ENCODE measurements at regions of chr2 and their contacts with region 1.

Region 1: DNA sequence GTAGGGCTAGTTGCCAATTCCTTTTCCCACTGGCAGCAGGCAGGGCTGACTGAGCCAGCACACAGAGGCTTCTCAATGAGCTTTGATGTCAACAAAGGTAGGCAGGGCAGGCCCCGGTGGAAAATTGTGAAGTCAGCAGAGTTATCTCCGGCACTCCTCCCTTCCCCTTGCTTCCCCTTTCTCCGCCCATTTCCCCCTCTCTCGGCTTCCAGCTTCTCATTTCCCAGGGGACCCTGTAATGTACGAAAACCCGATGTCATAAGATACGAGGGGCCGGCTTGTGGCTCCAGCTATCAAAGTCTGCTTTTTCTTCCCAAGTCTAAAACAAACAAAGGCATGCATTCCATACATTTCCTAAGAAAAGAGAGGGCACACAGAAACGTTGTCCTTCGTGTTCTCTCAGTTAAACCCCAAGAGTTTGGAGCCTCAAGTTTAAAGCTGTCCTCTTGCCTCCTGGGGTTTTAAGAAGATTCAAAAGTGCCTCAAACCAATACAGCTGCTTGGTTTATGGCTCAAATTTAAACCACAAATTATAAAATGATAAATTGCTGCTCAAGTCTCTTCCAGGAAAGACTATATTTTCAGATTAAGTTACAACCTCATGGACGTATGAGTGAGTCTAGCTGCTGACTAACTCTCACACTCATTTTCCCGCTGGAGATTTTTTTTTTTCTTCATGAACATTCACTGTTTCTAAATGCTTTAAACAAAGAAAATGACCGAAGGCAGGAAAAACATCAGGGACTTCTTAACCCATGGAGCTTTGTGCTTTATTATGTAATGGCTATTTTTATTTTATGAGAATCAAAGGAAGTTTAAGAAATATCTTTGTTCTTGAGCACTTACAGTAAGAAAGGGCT is 27.2 kb upstream of the EML4 start:
- DNase-seq: peak; percentile 94
- ATAC-seq: peak; percentile 77
- H3K4me3 ChIP-seq: peak overlapping the region; percentile 50 to 70 (median 63)
- H3K27ac ChIP-seq: peak overlapping the region; percentile 80
- H3K4me1 ChIP-seq: peaks cover 83% of the 10 kb centered on the region
- H3K27me3 ChIP-seq: no peaks in the 10 kb centered on the region; a peak in 1 of 5 replicates
- CTCF ChIP-seq: no peak
- EP300 ChIP-seq: peak in 1 of 2 experiments; percentile 90; a peak in 2 of 4 replicates
- POLR2A ChIP-seq: peak; percentile 45 to 61; a peak in 2 of 4 replicates
- RAD21 ChIP-seq: no peak

Region 2: DNA sequence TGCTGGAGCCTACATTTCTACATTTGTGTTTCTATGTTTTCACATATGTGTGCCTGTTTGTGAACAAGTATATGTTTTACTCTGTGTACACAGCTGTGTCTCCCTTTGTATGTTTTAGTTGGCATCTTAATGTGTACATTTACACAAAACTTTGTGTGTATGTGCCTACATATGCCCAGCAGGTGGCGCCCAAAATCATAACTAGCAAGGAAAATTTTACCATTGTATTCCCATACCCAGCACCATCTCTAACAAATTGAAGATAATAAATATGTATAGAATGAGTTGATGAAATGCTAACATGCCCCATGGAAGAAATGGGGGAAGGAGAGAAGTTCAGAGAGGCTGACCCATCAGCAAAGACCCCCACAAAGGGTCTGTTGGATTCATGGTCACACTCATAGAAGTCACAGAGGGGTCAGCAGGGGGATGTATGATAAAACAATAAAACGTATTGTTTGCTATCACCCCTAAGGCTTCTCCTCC is 46.0 kb before region 1 on chr2:
- CTCF ChIA-PET with region 1: no interaction called
- POLR2A ChIA-PET with region 1: interaction called, 42 read pairs
- in situ Hi-C with region 1: no loop called
- intact Hi-C with region 1: loop called (anchors 2 kb)
- DNase-seq: peak; percentile 81
- ATAC-seq: peak; percentile 20
- H3K4me3 ChIP-seq: no peak overlapping the region
- H3K27ac ChIP-seq: peak overlapping the region; percentile 1
- H3K4me1 ChIP-seq: peaks cover 86% of the 10 kb centered on the region
- H3K27me3 ChIP-seq: no peaks in the 10 kb centered on the region
- CTCF ChIP-seq: peak; percentile 88
- EP300 ChIP-seq: 0 out of 4 replicates have a peak, but pooled peaks of 1 of the 2 experiments have one; percentile 58
- POLR2A ChIP-seq: no peak
- RAD21 ChIP-seq: peak; percentile 88

Region 3: DNA sequence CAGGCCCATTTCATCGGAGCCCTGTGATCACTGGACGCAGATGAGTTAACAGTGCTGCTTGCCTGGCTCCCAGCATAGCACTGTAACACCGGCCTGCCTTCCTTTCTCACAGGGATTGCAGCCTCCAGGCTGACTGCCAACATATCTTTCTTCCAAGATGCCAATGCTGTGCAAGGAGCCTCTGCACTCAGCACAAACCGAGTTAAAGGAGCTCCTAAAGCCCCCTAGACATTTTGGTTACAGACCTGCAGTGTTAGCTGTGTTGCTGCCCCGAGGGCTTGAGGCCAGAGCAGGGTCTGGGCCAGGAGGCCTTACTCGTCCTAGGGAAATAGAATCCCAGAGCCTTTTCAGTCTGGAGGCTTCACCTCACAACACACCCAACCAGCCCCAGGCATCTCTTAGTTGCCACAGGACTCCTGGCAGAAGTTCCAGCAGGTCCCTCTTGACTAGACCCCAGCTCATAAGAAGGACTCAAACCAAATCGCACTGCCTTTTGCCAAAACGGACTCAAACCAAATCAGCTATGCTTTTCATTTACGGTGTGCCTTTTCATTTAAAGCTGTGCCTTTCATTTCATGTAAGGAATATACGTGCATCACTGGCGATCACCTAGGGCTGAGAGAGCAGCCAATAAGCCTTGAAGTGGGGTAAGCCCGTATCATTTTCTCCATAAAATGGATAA is 31.1 kb before region 1 on chr2:
- CTCF ChIA-PET with region 1: no interaction called
- POLR2A ChIA-PET with region 1: interaction called, 110 read pairs
- in situ Hi-C with region 1: no loop called
- intact Hi-C with region 1: no loop called
- DNase-seq: no peak
- ATAC-seq: peak; percentile 68
- H3K4me3 ChIP-seq: peak overlapping the region in 1 of 3 experiments; percentile 25; a peak in 2 of 6 replicates
- H3K27ac ChIP-seq: peak overlapping the region; percentile 54
- H3K4me1 ChIP-seq: peaks cover 95% of the 10 kb centered on the region
- H3K27me3 ChIP-seq: no peaks in the 10 kb centered on the region
- CTCF ChIP-seq: no peak
- EP300 ChIP-seq: no peak
- POLR2A ChIP-seq: no peak
- RAD21 ChIP-seq: no peak

Region 4: GRCh38 chr2:42127425-42128424 is 14.2 kb before region 1 on chr2:
- CTCF ChIA-PET with region 1: no interaction called
- POLR2A ChIA-PET with region 1: interaction called, 100 read pairs
- in situ Hi-C with region 1: no loop called
- intact Hi-C with region 1: no loop called
- DNase-seq: peak; percentile 97
- ATAC-seq: peak; percentile 89
- H3K4me3 ChIP-seq: peak overlapping the region; percentile 22 to 61 (median 57); a peak in 5 of 6 replicates
- H3K27ac ChIP-seq: peak overlapping the region; percentile 84
- H3K4me1 ChIP-seq: peaks cover 100% of the 10 kb centered on the region
- H3K27me3 ChIP-seq: no peaks in the 10 kb centered on the region
- CTCF ChIP-seq: 0 out of 2 replicates have a peak, but pooled peaks have one; percentile 8
- EP300 ChIP-seq: peak; percentile 18 to 96; a peak in 2 of 4 replicates
- POLR2A ChIP-seq: peak; percentile 23 to 45; a peak in 3 of 4 replicates
- RAD21 ChIP-seq: 0 out of 2 replicates have a peak, but pooled peaks have one; percentile 33

Region 5: DNA sequence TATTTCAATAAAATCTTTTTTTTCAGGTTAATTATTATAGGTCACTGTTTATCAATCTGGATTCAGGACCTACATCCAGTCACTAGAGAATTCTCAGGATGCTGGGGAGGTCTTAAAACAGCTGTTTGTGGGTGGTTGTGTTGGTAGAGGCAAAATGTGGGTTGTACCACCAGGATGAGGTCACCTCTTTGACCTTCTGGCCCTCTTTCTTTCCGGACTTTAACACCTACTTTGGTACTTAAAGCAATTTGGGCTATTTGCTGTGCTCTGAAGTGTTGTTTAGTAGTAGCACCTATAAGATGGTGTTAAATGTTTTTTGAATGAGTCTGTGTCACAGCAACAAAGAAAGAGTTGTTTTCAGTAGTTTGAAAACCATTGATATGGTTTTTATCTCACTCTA is 41.9 kb after region 1 on chr2:
- CTCF ChIA-PET with region 1: no interaction called
- POLR2A ChIA-PET with region 1: interaction called, 35 read pairs
- in situ Hi-C with region 1: no loop called
- intact Hi-C with region 1: no loop called
- DNase-seq: no peak
- ATAC-seq: no peak
- H3K4me3 ChIP-seq: peak overlapping the region in 2 of 3 experiments; percentile 6 to 22; a peak in 1 of 6 replicates
- H3K27ac ChIP-seq: peak overlapping the region; percentile 6
- H3K4me1 ChIP-seq: peaks cover 100% of the 10 kb centered on the region
- H3K27me3 ChIP-seq: no peaks in the 10 kb centered on the region
- CTCF ChIP-seq: no peak
- EP300 ChIP-seq: no peak
- POLR2A ChIP-seq: no peak
- RAD21 ChIP-seq: no peak

Region 6: GRCh38 chr2:42196403-42197267 is 54.7 kb after region 1 on chr2:
- CTCF ChIA-PET with region 1: no interaction called
- POLR2A ChIA-PET with region 1: interaction called, 35 read pairs
- in situ Hi-C with region 1: no loop called
- intact Hi-C with region 1: loop called (anchors 2 kb)
- DNase-seq: peak; percentile 83
- ATAC-seq: peak; percentile 73
- H3K4me3 ChIP-seq: peak overlapping the region in 1 of 3 experiments; percentile 41; a peak in 1 of 6 replicates
- H3K27ac ChIP-seq: peak overlapping the region; percentile 78
- H3K4me1 ChIP-seq: peaks cover 100% of the 10 kb centered on the region
- H3K27me3 ChIP-seq: no peaks in the 10 kb centered on the region
- CTCF ChIP-seq: peak; percentile 80
- EP300 ChIP-seq: peak; percentile 62 to 87
- POLR2A ChIP-seq: no peak
- RAD21 ChIP-seq: peak; percentile 85